Dendritic cell treated with granulocyte-macrophage colony-stimulating factor and Interleukin-4, amounts not matched to agents 40 ng/mL and 50 ng/mL, for 4 days (primary cell): ENCODE measurements at regions of chr15 and their contacts with region 1.

Region 1: DNA sequence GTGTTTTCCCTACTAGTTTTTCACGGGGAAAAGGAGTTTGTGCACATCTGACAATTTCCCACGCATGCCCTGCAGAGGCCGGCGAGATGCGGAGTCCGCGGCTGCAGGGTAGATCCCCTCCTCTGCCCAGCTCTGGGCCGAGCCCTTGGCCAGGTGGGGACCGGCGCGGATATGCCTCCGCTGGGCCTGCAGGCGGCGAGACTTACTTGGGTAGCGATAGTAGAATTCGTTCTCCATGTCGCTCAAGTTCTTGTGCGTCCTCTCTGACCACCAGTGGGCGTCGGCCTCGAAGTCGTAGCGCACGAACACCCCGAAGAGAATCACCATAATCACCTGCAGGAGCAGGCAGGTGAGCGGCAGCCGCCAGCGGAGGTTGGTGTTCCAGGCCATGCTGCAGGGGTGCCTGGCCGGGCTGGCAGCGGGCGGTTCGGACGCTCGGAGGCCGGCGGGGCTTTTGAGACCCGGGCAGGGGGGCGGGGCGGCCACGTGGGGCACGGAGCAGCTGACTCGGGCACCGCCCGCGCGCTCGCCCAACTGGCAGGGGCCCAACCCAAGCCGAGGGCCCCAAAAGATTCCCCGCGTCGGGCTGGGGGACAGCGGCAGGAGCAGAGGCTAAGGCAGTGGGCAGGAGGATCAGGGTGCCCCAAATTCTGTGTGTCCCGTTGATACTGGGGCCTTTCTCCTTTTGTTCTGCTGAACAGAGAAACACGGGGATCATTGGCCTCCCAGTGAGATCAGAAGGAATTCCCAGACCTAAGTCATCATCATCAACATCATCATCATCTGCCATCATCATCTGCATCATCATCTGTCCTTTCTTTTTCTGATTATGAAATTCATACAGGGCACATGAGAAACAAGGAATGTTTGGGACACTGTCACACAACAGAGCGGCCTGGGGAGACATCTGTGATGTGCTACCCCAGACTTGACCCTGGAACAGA is at the start of gene RHCG:
- H3K4me3 Mint-ChIP-seq: peak within 1 kb of the TSS; percentile 73
- H3K27ac Mint-ChIP-seq: no peak within 1 kb of the TSS
- H3K4me1 Mint-ChIP-seq: peaks cover 11% of the 10 kb centered on the region
- H3K27me3 Mint-ChIP-seq: peaks cover 65% of the 10 kb centered on the region

Region 2: DNA sequence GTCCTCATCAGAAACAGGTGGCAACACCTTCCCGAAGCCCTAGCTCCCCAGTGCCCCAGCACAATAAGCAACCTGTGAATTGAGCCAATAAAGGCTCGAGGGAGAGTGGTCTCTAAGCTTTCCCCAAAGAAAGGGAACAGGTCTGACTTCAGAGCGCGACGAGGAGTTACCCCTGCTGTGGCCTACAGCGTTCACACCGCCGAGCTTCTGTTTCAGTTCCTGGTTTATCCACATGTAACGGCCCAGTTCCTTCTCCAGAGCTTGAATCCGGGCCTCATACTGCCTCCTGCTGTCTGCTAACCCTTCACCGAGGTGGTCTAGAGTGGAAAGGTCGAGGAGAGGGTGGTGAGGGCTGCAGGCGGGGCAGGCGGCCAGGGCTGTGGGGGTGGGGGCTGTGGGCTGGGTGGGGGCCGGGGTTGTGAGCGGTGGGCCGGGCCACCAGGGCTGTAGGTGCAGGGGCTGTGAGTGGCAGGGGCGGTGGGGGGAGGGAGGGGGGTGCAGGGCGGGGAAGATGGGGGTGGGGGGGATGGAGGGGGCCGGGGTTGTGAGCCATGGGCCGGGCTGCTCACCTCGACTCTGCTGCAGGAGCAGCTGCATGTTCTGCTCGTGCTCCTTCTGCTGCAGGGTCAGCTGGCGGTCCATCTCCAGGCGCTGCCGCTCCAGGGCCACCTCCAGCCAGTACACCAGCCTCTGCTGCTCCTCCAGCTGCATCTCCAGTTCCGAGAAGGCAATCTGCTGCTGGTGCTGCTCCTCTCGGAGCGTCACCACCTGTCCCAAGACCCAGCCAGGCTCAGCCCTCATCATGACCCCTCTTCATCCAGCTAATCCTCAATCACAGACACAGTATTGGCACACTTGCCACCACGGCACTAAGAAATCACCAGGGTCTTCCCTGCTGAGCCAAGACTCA is 132.6 kb after region 1 on chr15:
- intact Hi-C with region 1: loop called (anchors 5 kb)
- H3K4me3 Mint-ChIP-seq: no peak overlapping the region
- H3K27ac Mint-ChIP-seq: peak overlapping the region; percentile 35
- H3K4me1 Mint-ChIP-seq: peaks cover 6% of the 10 kb centered on the region
- H3K27me3 Mint-ChIP-seq: no peaks in the 10 kb centered on the region